Activated B cell treated with CpG ODN at 0.5 μM for 24 hours (primary cell): ENCODE measurements at regions of chr5 and their contacts with region 1.

Region 1: DNA sequence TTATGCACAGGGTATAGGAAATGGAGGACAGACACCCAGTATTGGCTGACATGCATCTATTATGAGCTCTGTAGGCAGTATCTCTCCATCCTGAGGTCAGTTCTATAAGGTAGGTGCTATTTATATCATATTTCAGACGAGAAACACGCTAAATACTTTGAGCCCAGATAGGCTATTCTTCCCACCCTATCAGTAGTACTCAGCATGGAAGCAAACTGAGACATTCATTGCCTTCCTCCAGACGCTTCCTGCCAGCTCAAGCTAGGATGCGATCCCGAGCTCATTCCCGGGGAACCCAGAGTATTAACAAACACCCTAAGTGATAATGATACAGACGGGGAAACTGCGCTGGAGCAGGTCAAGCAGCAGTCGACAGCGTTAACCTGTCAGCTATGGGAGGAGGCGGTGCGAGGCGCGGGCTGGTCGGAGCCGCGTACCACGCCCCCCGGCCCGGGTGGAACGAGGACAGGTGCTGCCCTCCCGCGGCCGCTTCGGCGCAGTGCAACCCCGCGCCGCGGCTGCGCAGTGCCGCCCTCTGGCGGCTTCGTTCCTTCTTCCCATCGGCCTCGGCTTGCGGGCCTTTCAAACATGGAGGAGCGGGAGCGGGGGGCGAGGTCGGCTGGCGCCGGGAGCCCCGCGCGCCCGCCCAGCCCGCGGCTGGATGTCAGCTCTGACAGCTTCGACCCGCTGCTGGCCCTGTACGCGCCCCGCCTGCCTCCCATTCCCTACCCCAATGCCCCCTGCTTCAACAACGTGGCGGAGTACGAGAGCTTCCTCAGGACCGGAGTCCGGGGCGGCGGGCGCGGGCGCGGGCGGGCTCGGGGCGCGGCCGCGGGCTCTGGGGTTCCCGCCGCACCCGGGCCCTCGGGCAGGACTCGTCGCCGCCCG is at the start of gene LSM11:
- DNase-seq: peak; percentile 96
- ATAC-seq: peak; percentile 96
- H3K4me3 Mint-ChIP-seq: peak within 1 kb of the TSS; percentile 92
- H3K27ac Mint-ChIP-seq: peak within 1 kb of the TSS; percentile 80
- H3K4me1 Mint-ChIP-seq: peaks cover 22% of the 10 kb centered on the region
- H3K27me3 Mint-ChIP-seq: no peaks in the 10 kb centered on the region
- CTCF ChIP-seq: peak; percentile 67
- total RNA-seq, gene LSM11: 4.6 and 5.0 TPM in 2 replicates

Region 2: DNA sequence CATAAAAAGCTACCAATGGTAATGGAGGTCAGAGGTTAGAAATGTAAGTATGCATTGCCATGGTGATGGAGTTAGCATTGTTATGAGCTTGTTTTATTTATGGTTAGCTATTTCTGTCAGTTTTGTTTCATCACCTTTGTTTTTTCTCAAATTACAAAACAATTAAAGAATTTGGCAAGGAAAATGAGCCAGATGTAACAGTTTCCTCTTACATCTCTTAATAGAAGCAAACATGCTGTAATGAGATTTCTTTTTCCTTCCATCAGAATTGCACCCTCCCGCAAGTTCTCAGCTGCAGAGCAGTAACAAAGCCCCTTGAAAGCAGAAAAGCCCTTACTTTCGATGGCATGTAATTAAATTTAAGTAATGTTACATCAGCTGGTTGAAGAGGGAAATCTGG is 1183.4 kb before region 1 on chr5:
- CTCF ChIA-PET with region 1: no interaction called
- POLR2A ChIA-PET with region 1: no interaction called
- intact Hi-C with region 1: no loop called
- DNase-seq: no peak
- ATAC-seq: no peak
- H3K4me3 Mint-ChIP-seq: no peak overlapping the region
- H3K27ac Mint-ChIP-seq: no peak overlapping the region
- H3K4me1 Mint-ChIP-seq: no peaks in the 10 kb centered on the region
- H3K27me3 Mint-ChIP-seq: peaks cover 13% of the 10 kb centered on the region
- CTCF ChIP-seq: no peak

Region 3: DNA sequence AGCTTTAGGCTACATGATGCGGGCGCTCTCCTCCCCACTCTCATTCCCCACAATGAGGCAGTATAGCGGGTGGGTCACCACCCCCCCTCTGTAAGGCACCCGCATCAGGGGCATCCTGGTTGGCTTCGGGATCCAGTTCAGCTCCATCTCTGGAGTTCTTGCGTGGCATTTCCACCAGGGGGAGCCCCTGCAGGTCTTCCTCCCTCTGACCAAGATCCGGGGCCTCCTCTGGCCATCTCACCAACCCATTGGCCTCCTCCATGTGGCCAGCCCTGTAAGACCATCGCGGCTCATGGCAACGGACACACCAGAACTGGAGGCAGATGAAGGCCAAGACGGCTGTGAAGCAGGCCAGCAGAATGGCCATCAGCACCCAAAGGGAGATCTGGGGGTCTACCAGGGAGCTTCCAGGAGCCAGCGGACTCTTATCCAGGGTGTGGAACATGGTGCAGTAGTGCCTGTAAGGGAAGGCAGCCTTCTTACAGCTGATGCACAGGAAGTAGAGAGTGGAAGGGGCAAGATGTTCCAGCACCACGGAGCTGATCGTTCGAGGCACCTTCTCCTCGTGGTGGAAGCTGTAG is 400.5 kb before region 1 on chr5:
- CTCF ChIA-PET with region 1: interaction called, 18 read pairs
- POLR2A ChIA-PET with region 1: interaction called, 5 read pairs
- intact Hi-C with region 1: loop called (anchors 1 kb)
- DNase-seq: peak; percentile 27
- ATAC-seq: peak; percentile 50
- H3K4me3 Mint-ChIP-seq: no peak overlapping the region
- H3K27ac Mint-ChIP-seq: no peak overlapping the region
- H3K4me1 Mint-ChIP-seq: no peaks in the 10 kb centered on the region
- H3K27me3 Mint-ChIP-seq: no peaks in the 10 kb centered on the region
- CTCF ChIP-seq: no peak

Region 4: GRCh38 chr5:157476702-157477408 is 266.6 kb before region 1 on chr5:
- CTCF ChIA-PET with region 1: interaction called, 12 read pairs
- POLR2A ChIA-PET with region 1: no interaction called
- intact Hi-C with region 1: no loop called
- DNase-seq: no peak
- ATAC-seq: no peak
- H3K4me3 Mint-ChIP-seq: no peak overlapping the region
- H3K27ac Mint-ChIP-seq: peak overlapping the region; percentile 68
- H3K4me1 Mint-ChIP-seq: peaks cover 76% of the 10 kb centered on the region
- H3K27me3 Mint-ChIP-seq: no peaks in the 10 kb centered on the region
- CTCF ChIP-seq: no peak

Region 5: DNA sequence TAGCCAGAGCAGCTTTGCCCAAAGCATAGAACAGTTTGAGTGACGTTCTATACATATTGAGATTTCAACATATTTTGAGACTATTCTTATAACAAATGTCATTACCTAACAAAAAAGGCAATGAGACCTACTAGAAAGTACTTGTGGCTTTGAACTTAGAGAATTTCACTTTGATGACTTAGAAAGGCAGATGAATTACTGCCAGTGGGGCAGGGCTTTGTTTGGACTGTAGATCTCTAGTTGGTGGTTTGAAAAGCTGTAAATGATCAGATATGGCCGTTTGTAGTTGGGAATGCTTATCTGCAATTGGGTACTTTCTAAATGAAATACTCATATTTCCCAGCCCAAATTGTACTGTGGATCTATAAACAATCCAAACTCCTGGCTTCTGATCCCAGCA is 119.3 kb before region 1 on chr5:
- CTCF ChIA-PET with region 1: no interaction called
- POLR2A ChIA-PET with region 1: no interaction called
- intact Hi-C with region 1: no loop called
- DNase-seq: no peak
- ATAC-seq: no peak
- H3K4me3 Mint-ChIP-seq: no peak overlapping the region
- H3K27ac Mint-ChIP-seq: no peak overlapping the region
- H3K4me1 Mint-ChIP-seq: peaks cover 11% of the 10 kb centered on the region
- H3K27me3 Mint-ChIP-seq: no peaks in the 10 kb centered on the region
- CTCF ChIP-seq: no peak

Region 6: DNA sequence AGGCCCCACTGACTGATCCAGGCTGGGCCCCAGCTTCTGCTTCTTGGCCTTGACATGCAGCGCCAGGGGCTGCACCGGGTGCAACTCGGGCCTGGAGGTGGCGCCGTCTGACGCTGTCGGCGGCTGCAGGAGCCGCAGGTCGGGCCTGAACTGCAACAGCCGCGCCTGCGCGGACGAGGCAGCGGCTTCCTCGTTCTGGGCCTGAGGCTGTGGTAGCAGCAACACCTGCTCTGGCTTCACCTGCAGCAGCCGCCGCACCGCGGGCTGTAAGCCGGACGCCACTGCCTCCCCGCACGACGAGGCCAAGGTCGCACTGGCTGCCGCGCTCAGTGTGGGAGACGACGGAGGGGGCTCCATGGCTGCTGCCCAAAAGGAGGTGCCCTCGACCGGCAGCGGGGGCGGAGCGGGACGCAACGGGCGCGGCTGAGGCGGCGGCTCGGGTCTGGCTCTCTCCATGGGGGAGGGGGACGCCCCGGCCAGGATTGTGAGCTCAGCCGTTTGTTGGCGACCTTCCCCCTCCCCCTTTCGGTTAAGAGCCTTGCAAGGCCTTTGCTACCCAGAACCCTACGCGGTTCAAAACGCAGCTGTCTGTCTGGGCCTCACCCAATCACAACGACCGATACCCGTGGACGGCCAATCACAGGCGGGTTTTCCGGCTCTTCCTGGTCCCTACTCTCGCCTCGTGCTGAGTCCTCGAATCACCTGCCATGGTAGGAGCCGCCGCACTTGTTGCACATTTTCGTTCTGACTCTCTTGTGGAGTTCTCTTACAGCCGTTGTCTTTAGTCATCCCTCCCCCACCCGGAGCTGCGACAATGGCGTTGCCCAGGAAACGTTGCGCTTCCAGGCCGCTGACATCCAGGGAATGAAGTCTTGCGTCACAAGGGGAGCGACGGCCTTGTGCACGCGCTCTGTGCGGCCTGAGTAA is 91.5 kb before region 1 on chr5 and contains the start of gene SOX30:
- CTCF ChIA-PET with region 1: interaction called, 4 read pairs
- POLR2A ChIA-PET with region 1: no interaction called
- intact Hi-C with region 1: loop called (anchors 1 kb)
- DNase-seq: peak; percentile 77
- ATAC-seq: peak; percentile 97
- H3K4me3 Mint-ChIP-seq: peak within 1 kb of the TSS; percentile 84
- H3K27ac Mint-ChIP-seq: peak within 1 kb of the TSS; percentile 86
- H3K4me1 Mint-ChIP-seq: peaks cover 50% of the 10 kb centered on the region
- H3K27me3 Mint-ChIP-seq: no peaks in the 10 kb centered on the region
- CTCF ChIP-seq: no peak
- total RNA-seq, gene SOX30: 0.37 and 0.47 TPM in 2 replicates

Region 7: DNA sequence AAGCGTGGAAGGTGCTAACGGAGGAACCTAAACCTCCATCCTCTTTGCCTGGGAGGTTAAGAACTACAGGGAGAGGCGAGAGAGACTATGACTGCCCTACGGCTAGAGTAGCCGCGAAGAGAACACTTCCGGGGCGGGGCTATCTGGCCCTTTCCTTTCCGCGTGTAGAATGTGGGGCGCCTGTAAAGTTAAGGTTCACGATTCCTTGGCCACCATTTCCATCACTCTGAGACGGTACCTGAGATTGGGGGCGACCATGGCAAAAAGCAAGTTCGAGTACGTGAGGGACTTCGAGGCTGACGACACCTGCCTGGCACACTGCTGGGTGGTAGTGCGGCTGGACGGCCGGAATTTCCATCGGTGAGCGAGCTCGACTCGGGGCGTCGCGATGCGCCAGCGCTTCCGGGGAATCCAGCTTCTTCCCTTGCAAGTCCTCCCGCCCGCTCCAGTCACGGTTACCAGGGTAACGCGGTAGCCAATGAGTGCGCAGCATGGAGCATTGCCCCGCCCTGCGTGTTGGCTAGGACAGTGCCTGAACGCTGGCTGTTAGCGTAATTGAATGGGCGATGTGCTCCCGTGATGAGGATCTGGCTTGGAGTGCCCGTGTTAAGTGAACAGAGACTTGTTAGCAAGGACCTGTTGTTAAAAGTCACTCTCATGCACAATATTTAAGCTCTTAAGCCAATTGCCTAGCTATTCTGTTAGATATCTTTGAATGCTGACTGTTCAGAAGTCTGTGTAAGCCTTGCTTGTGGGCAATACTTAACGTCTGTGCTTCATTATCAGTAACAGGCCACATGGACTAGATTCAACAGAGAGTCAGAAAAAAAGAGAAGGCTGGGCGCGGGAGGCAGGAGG is 11.9 kb before region 1 on chr5 and contains the start of gene THG1L:
- CTCF ChIA-PET with region 1: interaction called, 15 read pairs
- POLR2A ChIA-PET with region 1: interaction called, 22 read pairs
- intact Hi-C with region 1: loop called (anchors 1 kb)
- DNase-seq: peak; percentile 93
- ATAC-seq: peak; percentile 84
- H3K4me3 Mint-ChIP-seq: peak within 1 kb of the TSS; percentile 98
- H3K27ac Mint-ChIP-seq: peak within 1 kb of the TSS; percentile 99
- H3K4me1 Mint-ChIP-seq: peaks cover 46% of the 10 kb centered on the region
- H3K27me3 Mint-ChIP-seq: no peaks in the 10 kb centered on the region
- CTCF ChIP-seq: no peak
- total RNA-seq, gene THG1L: 25.6 and 28.9 TPM in 2 replicates